ENCODE measurements at regions of chr22 and their contacts with region 1.

Region 1: GRCh38 chr22:28051787-28052356 is 132.8 kb upstream of the PITPNB start:
- DNase-seq: peak; percentile 21 to 53
- ATAC-seq: peak in 1 of 2 experiments; percentile 77; a peak in 3 of 6 replicates
- H3K4me3 ChIP-seq: no peak overlapping the region
- H3K27ac ChIP-seq: no peak overlapping the region
- H3K4me1 ChIP-seq: no peaks in the 10 kb centered on the region
- CTCF ChIP-seq: peak; percentile 75
- EP300 ChIP-seq: no peak
- POLR2A ChIP-seq: no peak
- RAD21 ChIP-seq: peak; percentile 81 to 84

Region 2: DNA sequence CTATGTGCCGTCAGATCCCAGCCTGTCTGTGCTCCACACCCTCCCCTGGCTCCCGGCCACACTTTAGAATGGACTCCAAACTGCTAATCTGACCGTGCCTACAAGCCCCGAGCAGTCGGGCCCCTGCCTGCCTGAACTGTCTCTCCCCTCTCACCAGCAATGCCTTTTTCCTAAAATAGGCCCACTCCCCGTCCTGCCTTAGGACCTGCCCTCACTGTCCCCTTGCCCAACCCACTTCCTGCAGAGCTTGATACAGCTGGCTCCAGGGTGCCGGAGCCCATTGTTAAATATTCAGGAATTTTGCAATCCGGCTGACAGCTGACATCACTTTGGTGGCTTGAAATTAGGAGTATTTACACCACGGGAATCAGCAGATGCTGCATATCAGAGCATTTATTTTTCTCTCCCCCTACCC is 271.7 kb before region 1 on chr22:
- CTCF ChIA-PET with region 1: no interaction called
- POLR2A ChIA-PET with region 1: no interaction called
- DNase-seq: no peak
- ATAC-seq: no peak
- H3K4me3 ChIP-seq: no peak overlapping the region
- H3K27ac ChIP-seq: no peak overlapping the region
- H3K4me1 ChIP-seq: no peaks in the 10 kb centered on the region
- CTCF ChIP-seq: no peak
- EP300 ChIP-seq: no peak
- POLR2A ChIP-seq: no peak
- RAD21 ChIP-seq: no peak

Region 3: DNA sequence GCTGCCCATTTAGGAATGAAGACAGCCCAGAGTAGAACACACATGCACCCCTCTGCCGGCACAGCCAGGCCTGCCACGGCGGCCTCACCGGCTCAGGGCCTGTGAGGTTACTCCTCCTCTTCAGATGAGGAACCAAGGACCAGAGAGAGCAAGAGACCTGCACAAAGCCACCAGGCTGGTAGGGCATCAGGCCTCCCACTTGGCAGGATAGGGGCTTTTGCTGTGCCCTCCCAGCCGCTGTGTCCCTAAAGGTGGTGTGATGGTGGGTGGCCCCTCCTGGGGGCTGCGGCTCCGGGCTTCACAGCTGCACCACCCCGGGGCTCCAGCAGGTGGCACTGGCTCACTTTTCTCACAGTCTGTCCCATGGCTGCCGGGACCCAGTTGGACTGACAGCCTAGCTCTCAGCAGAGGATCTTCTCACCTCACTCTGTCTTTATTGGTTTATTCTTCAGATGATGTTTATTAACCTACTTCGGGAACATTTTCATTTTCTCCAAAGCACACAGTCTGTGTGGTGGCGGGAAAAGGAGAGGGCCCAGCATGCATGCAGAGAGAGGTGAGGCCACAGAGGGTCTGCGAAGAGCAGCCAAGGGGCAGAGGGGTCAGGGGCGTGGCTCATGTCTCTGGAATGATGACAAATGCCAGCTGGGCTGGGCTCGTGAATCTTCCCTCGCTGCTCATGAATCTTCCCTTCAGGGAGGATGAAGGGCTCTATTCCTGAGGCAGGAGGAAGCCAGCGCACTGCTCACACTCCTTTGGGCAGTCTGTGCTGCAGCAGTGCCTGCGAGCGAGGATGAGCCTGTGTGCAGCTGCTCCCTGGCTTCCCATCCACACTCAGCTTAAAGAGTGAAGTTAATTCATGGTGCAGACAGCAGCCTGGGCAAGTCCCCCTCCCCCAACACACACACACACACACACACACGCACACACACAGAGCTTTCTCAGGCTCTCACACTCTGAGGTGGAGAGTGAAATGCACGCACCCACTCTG is 31.7 kb before region 1 on chr22:
- CTCF ChIA-PET with region 1: interaction called, 10 read pairs
- POLR2A ChIA-PET with region 1: no interaction called
- DNase-seq: peak; percentile 44 to 55
- ATAC-seq: peak; percentile 74 to 96
- H3K4me3 ChIP-seq: no peak overlapping the region
- H3K27ac ChIP-seq: no peak overlapping the region
- H3K4me1 ChIP-seq: peaks cover 8% of the 10 kb centered on the region; the same call in 1 of the 3 replicates
- CTCF ChIP-seq: peak; percentile 68
- EP300 ChIP-seq: no peak
- POLR2A ChIP-seq: no peak
- RAD21 ChIP-seq: peak; percentile 75

Region 4: DNA sequence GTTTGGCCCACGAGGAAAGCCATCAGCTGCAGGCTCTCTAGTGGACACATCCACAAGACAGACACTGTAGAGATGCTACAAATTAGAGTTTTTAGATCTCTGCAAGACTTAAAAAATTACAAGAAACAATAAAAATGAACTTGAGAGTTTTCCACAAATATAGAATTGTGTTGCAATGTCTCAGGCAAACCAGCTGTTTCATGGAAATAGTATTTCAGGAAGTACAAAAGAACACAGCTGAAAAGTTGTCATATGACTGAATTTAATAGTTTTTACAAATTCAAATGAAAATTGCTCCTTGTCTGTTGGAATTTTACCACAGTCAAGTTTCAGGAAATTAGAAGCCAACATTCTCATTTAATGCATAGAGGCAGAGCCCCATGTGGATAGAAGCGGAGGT is 51.7 kb after region 1 on chr22:
- CTCF ChIA-PET with region 1: no interaction called
- POLR2A ChIA-PET with region 1: no interaction called
- DNase-seq: no peak
- ATAC-seq: no peak
- H3K4me3 ChIP-seq: no peak overlapping the region
- H3K27ac ChIP-seq: no peak overlapping the region
- H3K4me1 ChIP-seq: no peaks in the 10 kb centered on the region
- CTCF ChIP-seq: no peak
- EP300 ChIP-seq: no peak
- POLR2A ChIP-seq: no peak
- RAD21 ChIP-seq: no peak

Region 5: DNA sequence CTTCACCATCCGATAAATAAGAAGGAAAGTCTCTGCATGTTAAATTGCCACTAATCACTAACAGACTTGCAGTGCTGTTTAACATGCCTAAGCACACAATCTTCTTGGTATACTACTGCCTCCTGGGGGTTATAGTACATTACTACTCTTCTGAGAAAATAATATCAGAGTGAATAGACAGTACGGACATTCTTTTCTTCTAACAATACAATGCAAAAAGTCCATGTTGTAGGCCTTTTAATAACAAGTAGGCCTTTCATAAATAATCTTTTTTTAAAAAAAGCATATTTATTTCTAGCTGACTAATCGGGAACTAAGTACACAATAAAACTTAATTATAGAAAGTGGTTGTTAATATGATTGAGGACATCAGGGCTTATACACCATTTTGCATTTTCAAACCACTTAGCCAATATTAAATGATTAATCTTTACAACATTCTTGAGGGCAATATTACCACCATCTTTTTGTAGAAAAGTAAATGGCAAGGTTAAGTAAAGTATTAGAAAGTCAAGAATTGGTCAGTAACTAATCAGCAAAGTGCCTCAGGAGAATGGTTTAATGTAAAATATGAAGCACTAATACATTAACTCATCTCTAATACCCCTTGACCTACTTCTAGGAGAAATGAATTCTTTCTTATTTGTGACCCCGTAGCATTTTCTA is 543.1 kb after region 1 on chr22:
- CTCF ChIA-PET with region 1: interaction called, 31 read pairs
- POLR2A ChIA-PET with region 1: no interaction called
- DNase-seq: peak; percentile 9 to 61
- ATAC-seq: peak; percentile 92 to 95
- H3K4me3 ChIP-seq: no peak overlapping the region
- H3K27ac ChIP-seq: no peak overlapping the region
- H3K4me1 ChIP-seq: peaks cover 29% of the 10 kb centered on the region
- CTCF ChIP-seq: peak; percentile 76
- EP300 ChIP-seq: no peak
- POLR2A ChIP-seq: no peak
- RAD21 ChIP-seq: peak; percentile 87 to 91

Region 6: DNA sequence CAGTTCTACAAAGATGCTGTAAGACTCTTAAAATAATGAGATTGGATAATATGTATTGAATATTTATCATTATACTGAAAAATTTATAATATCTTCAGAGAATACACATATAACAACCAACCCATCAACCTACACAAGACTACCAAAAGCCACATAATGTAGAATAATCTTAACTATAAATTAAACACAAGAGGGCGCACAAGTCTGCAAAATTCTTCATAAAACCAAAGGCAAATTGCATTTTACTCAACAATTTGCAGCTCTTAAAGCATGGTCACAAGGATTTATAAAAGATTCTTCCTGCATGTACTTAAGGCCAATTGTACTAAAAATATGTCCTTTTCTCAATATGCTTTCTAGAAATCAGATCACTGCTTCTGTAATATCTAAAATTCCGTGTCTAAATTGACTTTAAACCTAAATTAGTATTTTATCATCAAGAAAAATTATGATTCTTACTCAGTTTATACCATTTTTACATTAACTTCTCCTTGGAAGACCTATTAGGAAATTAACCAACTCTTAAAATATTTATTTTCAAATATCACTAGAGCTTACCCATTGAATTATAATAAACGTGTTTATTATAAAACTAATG is 548.8 kb after region 1 on chr22:
- CTCF ChIA-PET with region 1: interaction called, 31 read pairs
- POLR2A ChIA-PET with region 1: no interaction called
- DNase-seq: peak; percentile 11 to 48
- ATAC-seq: peak in 1 of 2 experiments; percentile 50; a peak in 3 of 6 replicates
- H3K4me3 ChIP-seq: no peak overlapping the region
- H3K27ac ChIP-seq: no peak overlapping the region
- H3K4me1 ChIP-seq: peaks cover 18% of the 10 kb centered on the region
- CTCF ChIP-seq: peak; percentile 61
- EP300 ChIP-seq: no peak
- POLR2A ChIP-seq: no peak
- RAD21 ChIP-seq: peak; percentile 75 to 82

Measured in A549 (cell line).